IMR-90 (cell line): ENCODE measurements at regions of chr12 and their contacts with region 1.

Region 1: DNA sequence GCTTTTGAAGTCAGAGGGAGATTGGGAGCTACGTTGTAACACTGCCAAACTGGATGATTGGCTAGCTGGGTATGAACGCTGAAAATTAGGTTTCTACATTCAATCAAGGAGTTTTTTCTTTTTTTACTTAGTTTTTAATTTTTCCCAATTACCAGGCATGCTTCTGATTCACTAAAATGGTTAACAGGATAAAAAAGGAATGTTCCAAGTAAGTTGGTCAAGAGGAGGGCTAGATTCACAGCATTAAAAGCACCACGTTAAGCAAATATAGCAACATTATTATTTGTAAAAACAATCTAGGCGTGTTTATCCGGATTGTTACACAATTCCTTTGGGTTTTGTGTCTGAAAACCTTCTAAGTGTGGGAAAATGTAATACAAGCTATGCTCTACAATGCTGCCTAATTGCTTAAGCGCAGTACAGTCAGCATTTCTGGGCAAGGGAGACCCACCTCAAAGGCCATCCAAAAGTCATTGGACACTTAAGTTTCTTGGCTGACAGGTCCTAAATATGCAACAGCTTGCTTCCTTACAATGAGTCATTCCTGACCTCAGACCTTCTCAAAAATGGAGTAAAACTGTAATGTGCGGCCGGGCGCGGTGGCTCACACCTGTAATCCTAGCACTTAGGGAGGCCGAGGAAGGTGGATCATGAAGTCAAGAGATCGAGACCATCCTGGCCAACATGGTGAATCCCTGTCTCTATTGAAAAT is 1.2 kb downstream of the RPLP0 start:
- DNase-seq: peak; percentile 77
- ATAC-seq: no peak
- H3K4me3 ChIP-seq: peak overlapping the region; percentile 57
- H3K27ac ChIP-seq: peak overlapping the region; percentile 57
- H3K4me1 ChIP-seq: peaks cover 8% of the 10 kb centered on the region
- H3K27me3 ChIP-seq: no peaks in the 10 kb centered on the region
- CTCF ChIP-seq: no peak
- POLR2A ChIP-seq: peak; percentile 52; the same call in 1 of the 2 replicates
- RAD21 ChIP-seq: no peak

Region 2: DNA sequence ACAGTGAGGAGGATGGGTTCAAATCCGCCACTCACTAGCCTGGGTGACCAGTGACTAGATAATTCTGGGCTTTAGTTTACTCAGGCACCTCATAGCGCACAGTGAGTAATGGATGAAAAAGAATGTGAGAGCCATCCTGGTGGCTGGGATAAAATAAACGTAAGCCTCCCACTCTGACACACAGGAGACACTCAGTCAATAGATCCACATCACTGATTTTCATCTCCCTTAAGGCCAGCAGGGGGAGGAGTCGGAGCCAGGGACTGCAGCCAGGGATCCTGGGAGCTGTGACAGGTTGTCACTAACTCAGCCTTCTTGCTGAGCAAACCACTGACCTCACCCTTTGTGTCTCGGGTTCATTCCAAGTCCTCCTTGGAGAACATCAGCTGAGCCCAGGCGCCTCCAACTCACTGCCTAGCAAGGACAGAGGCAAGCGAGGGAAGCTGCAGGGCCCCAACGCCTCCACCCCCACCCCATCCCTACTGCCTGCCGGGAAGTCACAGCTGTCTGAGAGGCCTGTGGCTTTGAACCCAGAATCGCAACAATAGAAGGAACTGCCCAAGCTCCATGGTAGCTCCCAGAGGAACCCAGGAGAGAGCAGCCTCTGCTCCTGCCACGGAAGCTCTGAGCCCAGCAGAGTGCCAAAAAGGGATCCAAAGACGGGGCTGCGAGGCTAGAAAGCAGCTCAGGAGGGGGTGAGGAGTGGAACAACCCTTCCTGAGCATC is 35.1 kb after region 1 on chr12:
- CTCF ChIA-PET with region 1: interaction called, 9 read pairs
- POLR2A ChIA-PET with region 1: interaction called, 19 read pairs
- dilution Hi-C with region 1: no loop called
- in situ Hi-C with region 1: no loop called
- intact Hi-C with region 1: no loop called
- DNase-seq: peak; percentile 97
- ATAC-seq: peak; percentile 52
- H3K4me3 ChIP-seq: no peak overlapping the region
- H3K27ac ChIP-seq: peak overlapping the region; percentile 92
- H3K4me1 ChIP-seq: peaks cover 70% of the 10 kb centered on the region
- H3K27me3 ChIP-seq: no peaks in the 10 kb centered on the region
- CTCF ChIP-seq: peak; percentile 63
- POLR2A ChIP-seq: no peak; the same call in 1 of the 2 replicates
- RAD21 ChIP-seq: peak; percentile 60

Region 3: DNA sequence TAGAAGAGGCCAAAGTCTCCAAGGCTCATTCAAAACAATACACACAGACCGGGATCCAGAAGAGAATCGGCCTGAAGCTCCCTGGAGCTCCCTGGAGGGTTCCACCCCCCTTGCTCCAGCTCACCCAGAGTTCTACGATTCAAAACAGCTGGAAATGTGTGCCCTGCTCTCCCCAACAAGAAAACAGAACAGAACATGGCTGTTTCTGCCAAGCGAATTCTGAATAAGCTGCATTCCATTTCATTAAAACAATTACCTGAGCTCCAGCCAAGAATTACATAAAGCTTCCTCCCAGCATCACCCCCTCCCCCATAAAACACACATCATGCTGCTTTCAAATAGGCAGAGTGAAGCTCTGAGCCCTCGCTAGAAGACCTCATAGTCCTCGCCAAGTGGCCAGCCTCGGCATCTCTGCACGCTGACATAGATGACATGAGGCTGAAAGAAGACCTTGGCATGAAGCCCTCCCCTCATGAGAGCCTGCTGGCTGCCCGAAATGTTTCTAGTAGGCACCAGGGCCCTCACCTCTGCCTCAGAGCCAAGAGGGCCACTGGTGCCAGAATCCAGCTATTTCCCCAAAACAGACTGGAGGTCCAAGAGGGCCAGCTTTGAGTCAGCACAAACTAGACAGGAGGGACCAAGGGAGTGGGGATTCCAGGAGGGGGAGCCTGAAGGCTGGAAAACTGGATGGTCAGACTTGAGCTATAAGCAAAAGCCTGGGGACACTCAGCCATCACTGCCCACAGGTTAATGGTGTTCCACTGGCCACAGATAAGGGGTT is 57.5 kb after region 1 on chr12:
- CTCF ChIA-PET with region 1: interaction called, 3 read pairs
- POLR2A ChIA-PET with region 1: interaction called, 10 read pairs
- dilution Hi-C with region 1: no loop called
- in situ Hi-C with region 1: no loop called
- intact Hi-C with region 1: no loop called
- DNase-seq: peak; percentile 93
- ATAC-seq: peak; percentile 83
- H3K4me3 ChIP-seq: no peak overlapping the region
- H3K27ac ChIP-seq: peak overlapping the region; percentile 70
- H3K4me1 ChIP-seq: peaks cover 28% of the 10 kb centered on the region
- H3K27me3 ChIP-seq: no peaks in the 10 kb centered on the region
- CTCF ChIP-seq: no peak
- POLR2A ChIP-seq: no peak
- RAD21 ChIP-seq: no peak